WTC11 (cell line): ENCODE measurements at regions of chr6 and their contacts with region 1.

Region 1: DNA sequence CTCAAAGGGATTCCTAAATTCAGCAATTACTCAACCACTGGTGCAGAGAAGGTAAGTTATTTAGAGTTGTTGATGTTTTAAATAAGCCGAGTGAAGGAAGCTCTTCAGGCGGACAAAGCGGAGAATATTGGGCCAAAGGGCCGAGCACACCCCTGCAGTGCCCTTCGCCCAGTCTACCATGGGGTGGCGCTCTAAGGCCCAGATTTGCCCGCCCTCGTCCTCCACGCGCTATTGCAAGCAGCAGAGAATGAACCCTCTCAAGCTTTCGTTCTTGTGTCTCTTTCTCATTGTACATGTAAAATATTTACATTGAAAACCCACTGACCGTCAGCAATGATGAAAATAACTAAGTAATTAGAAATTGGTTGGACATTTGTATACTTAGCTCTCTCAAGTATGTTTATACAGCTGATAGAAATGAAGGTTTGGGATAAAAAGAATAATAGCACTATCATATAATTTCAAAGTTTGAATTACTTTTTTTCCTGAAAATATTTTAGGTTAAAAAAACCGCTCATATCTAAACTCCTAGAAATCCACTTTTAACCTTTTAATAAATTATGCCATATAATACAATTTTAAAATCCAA is 195.0 kb upstream of the CEP162 start:
- DNase-seq: peak; percentile 82
- ATAC-seq: peak; percentile 98
- H3K4me3 Mint-ChIP-seq: no peak overlapping the region
- H3K27ac Mint-ChIP-seq: no peak overlapping the region
- H3K4me1 Mint-ChIP-seq: peaks cover 26% of the 10 kb centered on the region
- H3K27me3 Mint-ChIP-seq: no peaks in the 10 kb centered on the region
- CTCF ChIP-seq: peak; percentile 95

Region 2: DNA sequence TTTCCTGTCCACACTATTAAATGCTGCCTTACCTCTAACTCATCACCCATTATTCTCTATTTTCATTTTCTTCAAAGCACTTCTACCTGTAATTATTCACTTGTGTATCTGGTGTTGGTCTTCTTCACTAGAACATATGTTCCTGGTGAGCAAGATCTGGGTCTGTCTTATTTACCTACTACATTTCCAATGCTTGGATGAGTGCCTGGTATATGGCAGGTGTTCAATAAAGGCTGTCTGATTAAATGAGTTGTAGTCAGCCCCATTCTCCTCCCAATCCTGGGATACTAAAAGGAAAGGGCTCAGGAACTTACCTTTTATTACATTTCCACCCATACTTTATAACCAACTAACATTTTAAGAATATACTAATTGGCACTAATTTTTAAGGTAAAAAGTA is 256.1 kb before region 1 on chr6:
- CTCF ChIA-PET with region 1: no interaction called
- POLR2A ChIA-PET with region 1: no interaction called
- DNase-seq: no peak
- ATAC-seq: no peak
- H3K4me3 Mint-ChIP-seq: no peak overlapping the region
- H3K27ac Mint-ChIP-seq: no peak overlapping the region
- H3K4me1 Mint-ChIP-seq: no peaks in the 10 kb centered on the region
- H3K27me3 Mint-ChIP-seq: no peaks in the 10 kb centered on the region
- CTCF ChIP-seq: no peak

Region 3: DNA sequence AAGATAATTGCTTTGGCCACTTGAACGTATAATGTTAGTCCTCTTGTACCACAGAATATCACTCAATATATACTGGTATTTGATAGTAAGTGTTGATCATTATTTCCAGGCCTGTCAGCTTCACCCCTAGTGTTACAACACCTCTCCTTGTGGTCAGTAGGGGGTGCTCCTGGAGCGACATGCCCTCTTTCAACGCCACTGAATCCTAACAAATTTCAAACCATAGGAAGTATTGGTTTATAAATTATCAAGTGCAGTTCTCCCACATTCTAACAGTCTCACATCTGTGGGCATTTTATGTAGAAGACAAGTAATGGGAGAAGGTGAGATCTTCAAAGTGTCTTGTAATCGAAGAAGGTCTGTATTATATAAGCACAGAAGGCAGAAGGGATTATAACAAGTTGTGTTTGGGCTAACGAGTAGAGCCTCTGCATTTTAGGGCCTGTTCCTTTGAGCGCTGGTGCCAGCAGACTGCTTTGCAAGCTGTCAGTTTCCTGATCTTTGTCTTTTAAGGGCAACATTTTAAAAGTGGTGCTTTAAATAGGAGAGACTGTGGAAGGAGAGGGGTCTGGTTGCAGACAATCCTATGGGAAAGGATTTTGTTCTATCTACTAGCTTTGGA is 137.9 kb before region 1 on chr6:
- CTCF ChIA-PET with region 1: interaction called, 18 read pairs
- POLR2A ChIA-PET with region 1: no interaction called
- DNase-seq: peak; percentile 16
- ATAC-seq: peak; percentile 90
- H3K4me3 Mint-ChIP-seq: no peak overlapping the region
- H3K27ac Mint-ChIP-seq: no peak overlapping the region
- H3K4me1 Mint-ChIP-seq: no peaks in the 10 kb centered on the region; the same call in 1 of the 2 replicates
- H3K27me3 Mint-ChIP-seq: no peaks in the 10 kb centered on the region; the same call in 1 of the 2 replicates
- CTCF ChIP-seq: 0 out of 2 replicates have a peak, but pooled peaks have one; percentile 32

Region 4: DNA sequence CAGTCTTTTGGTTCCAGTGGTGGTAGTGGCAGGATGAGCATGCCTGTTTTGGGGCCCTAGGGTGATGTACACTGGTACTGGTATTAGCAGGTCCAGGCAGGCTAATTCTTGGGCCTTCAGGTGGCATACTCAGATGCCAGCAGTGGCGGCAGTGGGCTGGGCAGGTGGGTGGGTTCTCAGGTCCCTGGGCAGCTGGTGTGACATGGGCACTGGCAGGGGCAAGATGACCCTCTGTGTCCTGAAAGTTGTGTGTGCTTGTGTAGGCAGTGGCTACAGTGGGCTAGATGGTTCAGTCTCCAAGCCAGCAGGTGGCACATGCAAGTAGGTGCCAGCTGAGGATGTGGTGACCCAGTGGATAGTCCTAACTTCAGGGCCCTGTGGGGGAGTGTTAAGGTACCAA is 41.8 kb before region 1 on chr6:
- CTCF ChIA-PET with region 1: no interaction called
- POLR2A ChIA-PET with region 1: no interaction called
- DNase-seq: no peak
- ATAC-seq: no peak
- H3K4me3 Mint-ChIP-seq: no peak overlapping the region
- H3K27ac Mint-ChIP-seq: no peak overlapping the region
- H3K4me1 Mint-ChIP-seq: no peaks in the 10 kb centered on the region
- H3K27me3 Mint-ChIP-seq: no peaks in the 10 kb centered on the region
- CTCF ChIP-seq: no peak

Region 5: GRCh38 chr6:84442208-84442607 is 19.7 kb after region 1 on chr6:
- CTCF ChIA-PET with region 1: interaction called, 10 read pairs
- POLR2A ChIA-PET with region 1: no interaction called
- DNase-seq: no peak
- ATAC-seq: no peak
- H3K4me3 Mint-ChIP-seq: no peak overlapping the region
- H3K27ac Mint-ChIP-seq: no peak overlapping the region
- H3K4me1 Mint-ChIP-seq: 0 out of 2 replicates have a peak, but pooled peaks cover 2% of the 10 kb centered on the region
- H3K27me3 Mint-ChIP-seq: no peaks in the 10 kb centered on the region
- CTCF ChIP-seq: no peak

Region 6: DNA sequence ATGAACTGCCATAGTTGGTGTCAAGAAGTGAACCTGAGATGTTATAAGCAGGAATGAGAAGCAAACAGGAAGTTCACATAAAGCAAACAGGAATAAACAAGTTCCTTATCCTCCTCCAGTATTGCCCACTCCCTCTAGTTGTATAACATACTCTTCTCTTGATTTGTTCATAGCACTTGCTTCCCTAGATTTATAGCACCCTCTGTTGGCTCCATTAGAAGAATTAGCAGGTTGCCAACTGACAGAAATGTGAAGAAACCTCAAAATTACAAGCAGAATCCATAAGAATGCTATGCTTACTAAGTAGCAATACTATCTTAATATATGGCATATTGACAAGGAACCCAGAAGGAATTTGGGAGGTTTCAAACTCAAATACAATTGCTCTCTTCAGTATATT is 146.5 kb after region 1 on chr6:
- CTCF ChIA-PET with region 1: interaction called, 21 read pairs
- POLR2A ChIA-PET with region 1: no interaction called
- DNase-seq: no peak
- ATAC-seq: peak; percentile 83
- H3K4me3 Mint-ChIP-seq: no peak overlapping the region
- H3K27ac Mint-ChIP-seq: no peak overlapping the region
- H3K4me1 Mint-ChIP-seq: no peaks in the 10 kb centered on the region
- H3K27me3 Mint-ChIP-seq: no peaks in the 10 kb centered on the region; the same call in 1 of the 2 replicates
- CTCF ChIP-seq: no peak

Region 7: GRCh38 chr6:84764332-84765049 is 342.0 kb after region 1 on chr6 and contains the start of gene TBX18:
- CTCF ChIA-PET with region 1: interaction called, 14 read pairs
- POLR2A ChIA-PET with region 1: no interaction called
- DNase-seq: peak; percentile 97
- ATAC-seq: peak; percentile 84
- H3K4me3 Mint-ChIP-seq: peak within 1 kb of the TSS; percentile 82
- H3K27ac Mint-ChIP-seq: no peak within 1 kb of the TSS
- H3K4me1 Mint-ChIP-seq: peaks cover 46% of the 10 kb centered on the region
- H3K27me3 Mint-ChIP-seq: peaks cover 100% of the 10 kb centered on the region
- CTCF ChIP-seq: no peak
- total RNA-seq, gene TBX18: 0.15 TPM in 1 of 3 replicates, not detected in the others

Region 8: DNA sequence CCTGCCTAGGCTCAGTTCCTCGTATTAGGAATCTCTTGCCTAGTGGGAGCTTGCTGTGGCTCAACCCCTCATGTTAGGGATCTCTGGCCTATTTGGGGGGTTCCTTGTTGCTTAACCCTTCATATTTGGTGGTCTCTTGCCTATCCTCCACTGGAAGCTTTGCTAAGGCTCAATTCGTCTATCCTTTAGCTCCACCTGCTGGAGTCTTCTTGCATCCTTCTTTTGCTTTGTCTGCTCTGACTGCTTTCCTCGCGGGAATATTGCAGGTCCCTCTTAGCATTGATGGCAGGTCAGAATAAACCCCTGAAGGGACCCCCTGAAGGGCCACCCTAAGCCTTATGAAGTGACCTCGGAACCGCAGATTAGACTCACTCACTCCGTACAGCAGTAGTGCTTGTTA is 544.9 kb after region 1 on chr6:
- CTCF ChIA-PET with region 1: interaction called, 12 read pairs
- POLR2A ChIA-PET with region 1: no interaction called
- DNase-seq: peak; percentile 42
- ATAC-seq: peak; percentile 94
- H3K4me3 Mint-ChIP-seq: no peak overlapping the region
- H3K27ac Mint-ChIP-seq: no peak overlapping the region
- H3K4me1 Mint-ChIP-seq: peaks cover 5% of the 10 kb centered on the region; the same call in 1 of the 2 replicates
- H3K27me3 Mint-ChIP-seq: no peaks in the 10 kb centered on the region
- CTCF ChIP-seq: peak; percentile 28; the same call in 1 of the 2 replicates